SK-N-SH (cell line): ENCODE measurements at regions of chr7 and their contacts with region 1.

Region 1: DNA sequence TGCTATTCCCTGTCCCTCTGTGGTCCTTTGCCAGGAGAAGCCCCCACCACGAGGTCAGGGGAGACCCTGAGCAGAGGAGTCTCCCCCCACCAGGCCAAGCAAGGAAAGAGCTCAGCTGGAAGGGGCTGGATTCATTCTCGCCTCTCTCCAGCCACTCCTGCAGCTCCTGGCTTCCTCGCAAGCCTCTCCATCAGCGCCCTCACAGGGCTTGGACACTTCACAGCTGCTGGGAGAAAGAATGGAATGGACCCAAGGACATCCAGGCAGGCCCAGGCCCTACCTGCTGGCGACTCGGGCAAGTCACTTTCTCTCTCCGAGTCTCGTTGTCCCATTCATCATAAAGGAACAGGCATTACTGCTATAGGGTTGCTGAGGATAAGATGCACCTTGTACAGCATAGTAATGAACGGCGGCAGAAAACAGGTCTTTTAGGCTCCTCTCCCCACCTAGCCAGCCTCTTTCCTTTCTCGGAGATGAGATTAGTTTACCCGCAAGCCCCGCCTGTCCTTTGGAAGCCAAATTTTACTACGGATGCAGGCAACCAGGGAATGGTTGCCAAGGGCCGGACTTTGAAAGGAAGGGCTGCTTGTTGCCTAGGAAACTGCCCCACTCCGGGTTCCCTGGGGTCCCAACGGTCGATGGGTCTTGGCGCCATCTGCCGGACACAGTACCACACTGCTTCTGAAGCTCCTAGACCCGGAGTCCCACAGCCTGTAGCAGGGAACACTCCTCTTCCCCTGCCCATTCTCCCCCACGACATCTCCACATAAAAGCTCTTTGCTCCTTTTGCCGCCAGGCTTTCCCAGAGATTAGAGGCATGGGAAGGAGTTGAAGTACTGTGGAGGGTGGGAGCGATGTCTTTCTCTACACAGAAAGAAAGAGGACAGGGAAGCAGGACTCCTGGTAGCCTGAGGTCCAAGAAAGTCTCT is 22.3 kb downstream of the IMPDH1 start:
- DNase-seq: peak; percentile 99
- H3K4me3 ChIP-seq: peak overlapping the region in 1 of 2 experiments; percentile 16; a peak in 2 of 4 replicates
- H3K27ac ChIP-seq: peak overlapping the region in 1 of 2 experiments; percentile 94; a peak in 2 of 4 replicates
- H3K4me1 ChIP-seq: peaks cover 0 to 41% of the 10 kb centered on the region in 2 experiments; a peak in 1 of 4 replicates
- H3K27me3 ChIP-seq: no peaks in the 10 kb centered on the region
- CTCF ChIP-seq: peak; percentile 98
- EP300 ChIP-seq: peak in 1 of 2 experiments; percentile 57; a peak in 2 of 4 replicates
- RAD21 ChIP-seq: peak; percentile 99

Region 2: DNA sequence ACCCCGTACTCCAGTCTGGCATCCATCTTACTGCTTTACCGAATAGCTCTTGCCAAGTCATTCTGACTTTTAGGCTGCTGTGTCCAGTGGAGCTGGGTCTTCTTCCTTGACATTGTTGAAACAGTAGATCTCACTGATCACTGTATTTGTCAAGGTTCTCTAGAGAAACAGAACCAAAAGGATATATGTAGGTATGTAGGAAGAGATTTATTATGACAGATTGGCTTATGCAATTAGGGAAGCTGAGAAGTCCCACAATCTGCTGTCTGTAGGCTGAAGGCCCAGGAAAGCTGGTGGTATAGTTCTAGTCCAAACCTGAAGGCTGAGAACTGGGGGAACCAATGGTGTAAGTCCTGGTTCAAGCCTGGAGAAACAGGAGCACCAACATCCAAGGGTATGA is 13.9 kb before region 1 on chr7:
- CTCF ChIA-PET with region 1: interaction called, 493 read pairs
- POLR2A ChIA-PET with region 1: interaction called, 5 read pairs
- DNase-seq: peak; percentile 2
- H3K4me3 ChIP-seq: no peak overlapping the region
- H3K27ac ChIP-seq: no peak overlapping the region
- H3K4me1 ChIP-seq: peaks cover 0 to 2% of the 10 kb centered on the region in 2 experiments; a peak in 1 of 4 replicates
- H3K27me3 ChIP-seq: peaks cover 13% of the 10 kb centered on the region; the same call in 1 of the 2 replicates
- CTCF ChIP-seq: no peak
- EP300 ChIP-seq: no peak
- RAD21 ChIP-seq: no peak

Region 3: DNA sequence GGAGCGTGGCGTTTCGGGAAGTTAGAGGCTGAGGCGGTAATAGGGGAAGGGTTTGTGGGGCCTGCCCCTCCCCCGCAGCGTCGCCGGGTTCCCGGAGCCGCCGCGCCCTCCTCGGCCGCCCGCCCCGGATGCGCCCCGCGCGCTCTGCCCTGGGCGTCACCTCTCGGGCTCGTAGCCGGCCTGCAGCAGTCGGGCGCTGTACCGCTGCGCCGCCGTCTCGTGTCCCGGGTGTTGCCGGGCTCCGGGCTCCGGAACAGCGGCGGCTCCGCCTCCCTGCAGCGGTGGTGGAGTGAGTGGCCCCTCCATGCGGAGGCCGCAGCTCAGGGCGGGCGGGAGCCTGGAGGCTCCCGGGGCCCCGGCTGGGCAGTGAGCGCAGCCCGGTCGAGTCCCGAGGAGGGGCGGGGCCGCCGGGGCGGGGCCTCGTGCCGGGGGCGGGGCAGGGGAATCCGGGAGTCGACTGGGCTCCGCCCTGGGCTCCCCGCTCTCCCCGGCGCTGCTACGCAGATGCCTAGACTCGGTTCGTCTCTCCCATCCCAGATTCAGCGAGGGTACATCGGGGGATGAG is 22.2 kb after region 1 on chr7 and contains the start of gene IMPDH1:
- CTCF ChIA-PET with region 1: interaction called, 1,901 read pairs
- POLR2A ChIA-PET with region 1: interaction called, 4 read pairs
- DNase-seq: peak; percentile 100
- H3K4me3 ChIP-seq: peak within 1 kb of the TSS; percentile 69 to 83
- H3K27ac ChIP-seq: peak within 1 kb of the TSS; percentile 35 to 79; a peak in 3 of 4 replicates
- H3K4me1 ChIP-seq: peaks cover 16 to 27% of the 10 kb centered on the region in 2 experiments; a peak in 2 of 4 replicates
- H3K27me3 ChIP-seq: no peaks in the 10 kb centered on the region
- CTCF ChIP-seq: no peak
- EP300 ChIP-seq: no peak
- RAD21 ChIP-seq: no peak
- polyA plus RNA-seq, gene IMPDH1: 80.4 and 82.0 TPM in 2 replicates